ENCODE measurements at regions of chr2 and their contacts with region 1.

Region 1: DNA sequence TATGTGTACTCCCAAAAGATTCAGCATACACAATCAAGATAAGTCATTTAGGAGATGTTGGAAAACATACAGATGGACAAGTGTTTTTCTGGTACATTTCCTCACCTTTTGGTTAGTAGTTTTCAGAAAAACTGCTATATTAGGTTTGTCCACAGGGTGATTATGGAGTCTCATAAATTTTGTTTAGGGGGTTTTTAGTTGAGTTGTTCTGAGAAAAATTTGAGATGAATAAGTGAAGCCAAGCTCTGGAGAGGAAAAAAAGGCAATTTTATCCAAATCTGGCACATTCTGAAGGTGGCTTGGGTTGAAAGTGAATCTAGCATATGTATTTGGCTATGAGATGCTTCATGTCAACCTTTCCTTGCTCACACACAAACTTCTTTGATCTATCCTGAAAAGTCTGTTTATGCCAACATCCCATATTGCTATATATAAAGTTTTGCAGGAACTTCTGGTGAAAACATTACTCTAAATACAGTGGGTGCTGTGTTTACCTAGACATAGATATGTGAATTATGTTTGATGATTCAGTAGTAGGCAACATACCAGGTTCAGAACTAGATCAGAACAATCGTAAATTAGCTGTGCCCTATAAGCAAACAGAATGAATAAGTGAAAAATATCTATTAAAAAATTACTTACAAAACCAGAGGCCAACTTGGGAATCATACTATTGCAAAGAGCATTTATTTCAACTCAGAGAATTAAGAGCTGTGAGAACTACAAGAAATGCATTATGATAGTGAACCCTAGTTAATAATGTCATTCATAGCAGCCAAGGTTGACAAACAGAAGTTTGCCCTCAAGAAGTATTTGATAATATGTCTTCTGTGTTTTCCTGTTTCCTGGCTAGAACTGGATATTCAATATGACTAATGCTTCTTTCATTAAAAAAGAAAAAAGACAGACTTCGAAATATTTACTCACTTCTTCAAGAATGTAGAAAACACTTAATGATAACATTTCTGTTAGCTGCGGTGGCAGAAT is 552.0 kb downstream of the IRS1 start:
- DNase-seq: peak; percentile 76
- ATAC-seq: peak; percentile 92
- H3K4me3 ChIP-seq: peak overlapping the region; percentile 33; the same call in 1 of the 2 replicates
- H3K27ac ChIP-seq: peak overlapping the region; percentile 78
- H3K4me1 ChIP-seq: peaks cover 27% of the 10 kb centered on the region
- H3K27me3 ChIP-seq: no peaks in the 10 kb centered on the region
- CTCF ChIP-seq: peak; percentile 29; the same call in 1 of the 2 replicates

Region 2: DNA sequence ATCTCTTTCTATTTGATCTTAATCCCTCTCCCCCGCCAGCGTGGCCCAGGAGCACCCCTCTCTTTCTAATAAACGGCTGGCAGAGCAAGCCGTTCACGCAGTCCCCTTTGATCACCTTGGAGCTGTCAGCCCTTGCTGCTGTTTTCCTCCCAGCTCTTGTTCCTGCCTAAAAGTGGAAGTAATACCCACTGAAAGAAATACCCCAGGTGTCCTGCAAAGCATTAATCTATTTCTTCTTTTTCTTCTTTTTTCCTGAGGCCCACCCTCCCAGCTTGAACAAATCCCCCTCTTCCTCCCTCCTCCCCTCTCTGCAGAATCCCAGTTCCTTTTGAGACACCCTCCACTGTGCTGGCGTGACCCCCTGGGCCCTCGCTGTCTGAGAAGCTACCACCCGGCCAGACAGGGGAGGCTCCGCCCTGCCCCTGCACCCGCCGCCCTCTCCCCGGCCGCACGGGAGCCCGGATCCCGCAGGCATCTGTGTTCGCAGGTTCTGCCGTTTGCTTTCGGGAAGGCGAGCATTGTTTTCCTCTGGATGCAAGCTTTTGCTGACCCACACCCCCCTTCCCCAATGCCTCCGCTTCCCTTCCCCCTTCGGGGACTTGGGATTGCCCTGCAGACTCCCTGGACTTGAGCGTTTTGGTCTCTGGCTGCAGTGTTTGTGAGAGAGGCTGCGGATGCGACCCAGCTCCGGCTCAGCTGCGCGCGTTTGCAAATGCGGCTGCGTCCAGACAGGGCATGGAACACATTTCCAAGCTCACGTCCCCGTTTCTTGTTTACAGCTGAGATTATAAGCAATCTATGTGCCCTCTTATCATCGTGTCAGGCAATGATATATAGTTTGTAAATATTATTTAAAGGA is 216.6 kb before region 1 on chr2:
- CTCF ChIA-PET with region 1: no interaction called
- POLR2A ChIA-PET with region 1: no interaction called
- intact Hi-C with region 1: loop called (anchors 10 kb)
- DNase-seq: peak; percentile 65
- ATAC-seq: peak; percentile 86
- H3K4me3 ChIP-seq: peak overlapping the region; percentile 73
- H3K27ac ChIP-seq: peak overlapping the region; percentile 64
- H3K4me1 ChIP-seq: peaks cover 12% of the 10 kb centered on the region
- H3K27me3 ChIP-seq: no peaks in the 10 kb centered on the region
- CTCF ChIP-seq: no peak

Region 3: DNA sequence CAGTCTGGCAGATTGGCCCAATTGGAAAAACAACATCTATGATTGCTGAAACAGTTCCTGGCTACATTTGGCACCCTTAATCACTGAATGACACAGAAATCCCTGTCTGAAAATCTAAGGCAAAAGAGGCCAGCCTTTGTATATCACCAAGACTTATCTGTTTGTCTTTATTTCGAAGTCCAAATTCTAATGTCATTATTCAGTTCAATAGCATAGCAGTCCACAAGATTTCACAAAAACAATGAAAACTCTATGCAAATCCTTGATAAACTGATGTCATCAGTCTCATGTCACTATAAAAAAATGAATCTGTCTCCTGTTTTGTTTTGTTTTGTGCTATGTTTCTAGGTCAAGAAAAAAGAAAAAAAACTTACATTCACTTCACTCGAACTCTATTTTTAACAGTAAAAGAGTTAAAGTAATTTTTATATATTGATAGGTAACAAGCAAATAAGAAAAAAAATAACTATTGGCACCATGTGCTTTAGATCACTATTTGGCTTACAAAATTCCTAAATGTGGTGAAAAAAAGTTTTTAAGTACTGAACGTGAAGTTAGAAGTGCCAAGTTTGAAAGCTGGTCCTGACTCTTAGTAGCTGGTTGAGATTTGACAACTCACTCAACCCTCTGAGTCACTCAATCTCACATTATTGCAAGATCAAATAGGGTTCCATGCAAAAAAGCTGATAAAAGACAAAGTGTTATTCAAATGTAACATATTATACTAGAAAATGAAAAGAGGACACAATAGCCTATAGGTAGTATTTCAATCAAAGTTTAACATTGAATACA is 192.7 kb after region 1 on chr2:
- CTCF ChIA-PET with region 1: no interaction called
- POLR2A ChIA-PET with region 1: interaction called, 11 read pairs
- intact Hi-C with region 1: no loop called
- DNase-seq: peak; percentile 68
- ATAC-seq: peak; percentile 64
- H3K4me3 ChIP-seq: no peak overlapping the region
- H3K27ac ChIP-seq: peak overlapping the region; percentile 67
- H3K4me1 ChIP-seq: peaks cover 19% of the 10 kb centered on the region
- H3K27me3 ChIP-seq: no peaks in the 10 kb centered on the region
- CTCF ChIP-seq: no peak

Region 4: DNA sequence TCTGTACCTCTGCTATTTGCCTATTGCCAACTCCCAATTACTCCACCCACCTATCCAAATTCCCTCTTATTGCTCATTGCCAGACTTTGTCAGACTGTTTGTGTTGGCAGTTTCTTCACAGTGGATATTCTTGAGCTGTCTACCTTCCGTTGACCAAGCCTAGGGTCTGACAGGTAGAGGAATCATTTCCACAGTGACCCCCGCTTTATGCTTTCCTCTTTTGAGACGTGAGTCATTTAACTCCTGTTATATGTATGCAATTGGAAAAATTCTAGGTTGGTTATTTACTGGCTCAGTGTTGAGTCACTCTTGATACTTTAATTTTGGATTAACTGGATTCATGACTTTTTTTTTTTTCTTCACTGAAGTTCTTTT is 364.3 kb after region 1 on chr2:
- CTCF ChIA-PET with region 1: no interaction called
- POLR2A ChIA-PET with region 1: no interaction called
- intact Hi-C with region 1: loop called (anchors 5 kb)
- DNase-seq: peak; percentile 97
- ATAC-seq: peak; percentile 92
- H3K4me3 ChIP-seq: no peak overlapping the region
- H3K27ac ChIP-seq: peak overlapping the region; percentile 93
- H3K4me1 ChIP-seq: peaks cover 37% of the 10 kb centered on the region
- H3K27me3 ChIP-seq: no peaks in the 10 kb centered on the region
- CTCF ChIP-seq: no peak